Transverse colon (tissue), 4 donors: ENCODE measurements at regions of chr10 and their contacts with region 1.

Region 1: GRCh38 chr10:22997102-22997501 is 69.2 kb downstream of the ARMC3 start:
- DNase-seq: no peak
- H3K4me3 ChIP-seq: no peak overlapping the region
- H3K27ac ChIP-seq: no peak overlapping the region
- H3K4me1 ChIP-seq: no peaks in the 10 kb centered on the region
- H3K27me3 ChIP-seq: peaks cover 9% of the 10 kb centered on the region
- CTCF ChIP-seq: no peak
- EP300 ChIP-seq: no peak
- POLR2A ChIP-seq: no peak

Region 2: DNA sequence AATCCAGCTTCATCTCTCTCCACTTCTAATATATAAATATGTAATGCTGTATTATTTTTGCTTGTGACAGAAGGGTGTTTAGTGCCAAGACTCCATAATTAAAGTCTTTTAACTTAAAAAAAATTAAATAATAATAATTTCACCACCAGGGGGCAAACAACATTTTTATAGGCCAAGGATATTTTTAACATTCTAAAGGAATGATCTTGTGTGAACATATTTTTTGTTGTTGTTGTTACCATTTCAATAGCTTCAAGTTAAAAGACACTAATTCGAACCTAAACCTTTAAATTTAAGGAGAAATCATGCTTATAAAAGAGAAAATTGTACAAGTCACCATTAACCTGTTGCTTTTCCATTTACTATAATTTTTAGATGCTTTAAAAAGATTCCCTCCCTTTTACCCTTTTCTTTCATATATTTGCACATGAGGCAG is 986.1 kb before region 1 on chr10:
- in situ Hi-C with region 1: loop called in 1 of 4 experiments (anchors 10 kb)
- intact Hi-C with region 1: no loop called
- DNase-seq: no peak
- H3K4me3 ChIP-seq: no peak overlapping the region
- H3K27ac ChIP-seq: no peak overlapping the region
- H3K4me1 ChIP-seq: no peaks in the 10 kb centered on the region
- H3K27me3 ChIP-seq: no peaks in the 10 kb centered on the region
- CTCF ChIP-seq: peak; percentile 32 to 53 (median 51)
- EP300 ChIP-seq: no peak
- POLR2A ChIP-seq: no peak

Region 3: DNA sequence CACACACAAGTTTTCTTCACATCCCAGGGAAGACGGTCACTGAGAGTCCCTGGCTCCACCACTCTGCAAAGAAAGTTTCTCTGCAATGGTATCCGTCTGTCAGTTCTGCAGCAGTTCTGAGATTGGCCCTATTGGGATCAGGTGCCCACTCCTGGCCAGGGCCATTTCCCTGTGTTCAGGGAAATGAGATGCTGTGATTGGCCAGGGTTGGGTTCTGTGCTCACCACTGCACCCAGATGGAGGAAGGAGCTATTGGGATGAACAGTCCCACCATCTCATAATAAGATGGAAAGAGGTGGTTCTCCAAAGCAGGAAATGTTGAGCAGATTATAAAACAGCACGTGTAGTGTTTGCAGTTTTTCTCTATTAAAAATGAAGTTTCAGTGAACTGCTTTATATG is 269.4 kb before region 1 on chr10:
- in situ Hi-C with region 1: no loop called
- intact Hi-C with region 1: no loop called
- DNase-seq: no peak
- H3K4me3 ChIP-seq: no peak overlapping the region
- H3K27ac ChIP-seq: no peak overlapping the region
- H3K4me1 ChIP-seq: no peaks in the 10 kb centered on the region
- H3K27me3 ChIP-seq: no peaks in the 10 kb centered on the region
- CTCF ChIP-seq: no peak
- EP300 ChIP-seq: no peak
- POLR2A ChIP-seq: no peak